GM12878 (cell line): ENCODE measurements at regions of chr1 and their contacts with region 1.

Region 1: DNA sequence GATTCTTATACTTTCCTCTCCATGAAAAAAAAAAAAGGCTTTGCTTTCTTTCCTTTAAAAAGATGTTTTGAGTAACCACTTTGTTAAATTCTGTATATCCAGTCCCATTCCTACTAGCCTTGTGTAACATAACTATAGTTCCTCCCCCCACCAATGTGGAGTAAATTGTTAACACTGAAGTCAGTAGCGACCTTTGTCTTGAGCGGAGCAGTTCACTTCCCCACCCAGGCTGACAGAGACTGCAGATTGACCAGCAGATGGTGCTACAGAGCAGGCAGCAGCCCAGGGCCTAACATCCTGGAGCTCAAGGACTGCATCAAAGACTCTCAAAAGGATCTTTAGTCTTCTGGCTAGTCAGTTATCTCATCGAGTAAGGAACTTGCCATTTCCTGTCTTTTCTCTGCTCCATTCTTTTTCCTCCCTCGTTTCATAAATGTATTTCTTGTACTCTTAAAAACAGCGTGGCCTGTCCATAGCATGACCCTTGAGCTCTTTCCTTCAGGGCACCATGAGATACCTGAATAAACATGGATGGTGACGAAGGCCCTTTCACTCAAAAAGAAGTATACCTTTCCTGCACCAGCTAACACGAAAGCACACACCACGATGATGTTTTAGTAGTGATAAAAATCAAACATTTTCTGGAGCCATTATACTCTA is 503.5 kb upstream of the PKN2 start:
- DNase-seq: peak; percentile 35
- ATAC-seq: peak; percentile 100
- H3K4me3 ChIP-seq: no peak overlapping the region
- H3K27ac ChIP-seq: no peak overlapping the region
- H3K4me1 ChIP-seq: no peaks in the 10 kb centered on the region
- H3K27me3 ChIP-seq: no peaks in the 10 kb centered on the region; a peak in 1 of 4 replicates
- CTCF ChIP-seq: peak; percentile 91 to 96 (median 94)
- EP300 ChIP-seq: no peak
- POLR2A ChIP-seq: no peak
- RAD21 ChIP-seq: peak; percentile 84

Region 2: DNA sequence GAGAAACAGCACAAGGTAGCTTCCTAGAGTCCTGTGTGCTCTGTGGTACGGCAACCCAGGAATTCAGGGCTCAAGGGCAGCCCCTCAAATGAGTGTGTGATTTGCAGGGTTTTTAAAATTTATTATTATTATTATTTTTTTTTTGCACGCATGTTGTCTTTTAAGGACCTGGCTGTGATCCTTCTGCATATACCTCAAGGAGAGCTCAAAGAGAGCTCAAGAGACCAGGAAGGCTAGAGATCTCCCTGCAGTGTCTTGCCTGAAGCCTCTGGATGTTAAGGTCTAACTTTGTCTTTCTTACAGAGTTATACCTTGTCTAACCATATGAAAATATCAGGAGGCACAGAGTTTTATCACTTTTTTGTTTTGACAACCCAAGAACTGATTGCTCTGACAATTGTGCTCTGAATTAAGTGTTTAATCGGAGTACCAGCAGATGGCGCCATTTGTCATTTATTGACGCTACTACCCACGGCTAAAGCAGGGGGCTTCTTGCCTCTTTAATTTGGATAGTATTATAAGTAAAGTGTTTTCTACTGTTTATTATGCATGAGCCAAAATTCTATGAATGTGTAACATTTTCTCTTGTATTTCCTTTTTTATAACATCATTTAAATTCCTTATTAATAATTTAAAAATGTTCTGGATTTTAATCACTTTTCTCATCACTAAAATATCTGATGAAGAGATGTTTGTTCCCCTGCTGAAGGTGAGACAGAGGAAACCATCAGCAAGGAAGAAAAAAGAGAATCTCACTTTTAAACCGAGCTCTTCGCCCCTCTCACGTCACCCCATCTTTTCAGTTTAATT is 887.7 kb before region 1 on chr1:
- CTCF ChIA-PET with region 1: interaction called, 8 read pairs
- POLR2A ChIA-PET with region 1: no interaction called
- RAD21 ChIA-PET with region 1: no interaction called
- SMC1A ChIA-PET with region 1: interaction called, 3 read pairs
- in situ Hi-C with region 1: no loop called
- intact Hi-C with region 1: loop called (anchors 10 kb)
- DNase-seq: no peak
- ATAC-seq: peak; percentile 87
- H3K4me3 ChIP-seq: no peak overlapping the region
- H3K27ac ChIP-seq: no peak overlapping the region
- H3K4me1 ChIP-seq: no peaks in the 10 kb centered on the region
- H3K27me3 ChIP-seq: no peaks in the 10 kb centered on the region
- CTCF ChIP-seq: peak; percentile 61 to 76 (median 74)
- EP300 ChIP-seq: no peak
- POLR2A ChIP-seq: no peak
- RAD21 ChIP-seq: peak; percentile 86

Region 3: DNA sequence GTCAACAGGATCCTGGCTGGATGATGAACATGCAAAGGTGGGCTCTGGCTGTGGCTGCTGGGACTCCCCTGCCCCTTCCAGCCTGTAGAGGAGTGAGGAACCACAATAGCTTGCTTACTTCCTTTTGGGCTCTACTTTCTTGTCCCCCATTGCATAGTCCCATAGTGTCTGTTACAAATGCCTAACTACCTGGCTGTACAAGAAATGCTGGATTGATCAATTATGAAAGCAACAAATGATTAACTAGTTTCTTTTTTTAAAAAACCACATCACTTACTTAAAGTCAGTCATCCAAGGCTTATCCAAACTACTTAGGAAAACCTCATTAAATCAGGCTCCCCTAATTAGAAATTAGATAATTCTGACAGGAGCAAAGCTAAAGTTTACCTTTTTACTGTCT is 10.6 kb before region 1 on chr1:
- CTCF ChIA-PET with region 1: interaction called, 16 read pairs
- POLR2A ChIA-PET with region 1: no interaction called
- RAD21 ChIA-PET with region 1: no interaction called
- SMC1A ChIA-PET with region 1: no interaction called
- in situ Hi-C with region 1: no loop called
- intact Hi-C with region 1: no loop called
- DNase-seq: no peak
- ATAC-seq: no peak
- H3K4me3 ChIP-seq: no peak overlapping the region
- H3K27ac ChIP-seq: no peak overlapping the region
- H3K4me1 ChIP-seq: no peaks in the 10 kb centered on the region
- H3K27me3 ChIP-seq: no peaks in the 10 kb centered on the region; a peak in 2 of 4 replicates
- CTCF ChIP-seq: no peak
- EP300 ChIP-seq: no peak
- POLR2A ChIP-seq: no peak
- RAD21 ChIP-seq: no peak

Region 4: DNA sequence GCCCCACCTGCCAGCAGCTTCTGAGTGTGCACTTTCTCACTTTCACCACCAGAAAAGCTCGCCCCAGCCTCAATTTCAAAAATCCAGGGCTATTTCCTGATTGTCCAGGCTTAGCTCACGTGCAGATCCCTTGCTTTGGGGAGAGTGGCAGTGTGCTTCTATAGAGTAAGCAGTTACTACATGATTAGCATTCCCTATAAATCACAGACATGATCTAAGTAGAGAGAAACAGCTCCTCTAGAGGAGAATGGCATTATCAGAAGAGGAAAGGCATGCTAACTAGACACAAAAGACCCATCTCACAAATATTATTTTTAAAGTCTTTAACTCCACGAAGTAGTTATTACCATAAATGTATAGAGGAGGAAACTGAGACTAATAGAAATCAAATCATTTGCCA is 47.6 kb after region 1 on chr1:
- CTCF ChIA-PET with region 1: interaction called, 15 read pairs
- POLR2A ChIA-PET with region 1: no interaction called
- RAD21 ChIA-PET with region 1: interaction called, 3 read pairs
- SMC1A ChIA-PET with region 1: interaction called, 3 read pairs
- in situ Hi-C with region 1: no loop called
- intact Hi-C with region 1: no loop called
- DNase-seq: no peak
- ATAC-seq: no peak
- H3K4me3 ChIP-seq: no peak overlapping the region
- H3K27ac ChIP-seq: no peak overlapping the region
- H3K4me1 ChIP-seq: no peaks in the 10 kb centered on the region
- H3K27me3 ChIP-seq: no peaks in the 10 kb centered on the region; a peak in 1 of 4 replicates
- CTCF ChIP-seq: no peak
- EP300 ChIP-seq: no peak
- POLR2A ChIP-seq: no peak
- RAD21 ChIP-seq: no peak

Region 5: GRCh38 chr1:88302843-88303486 is 122.4 kb after region 1 on chr1:
- CTCF ChIA-PET with region 1: interaction called, 14 read pairs
- POLR2A ChIA-PET with region 1: no interaction called
- RAD21 ChIA-PET with region 1: interaction called, 12 read pairs
- SMC1A ChIA-PET with region 1: interaction called, 10 read pairs
- in situ Hi-C with region 1: no loop called
- intact Hi-C with region 1: loop called (anchors 1 kb)
- DNase-seq: no peak
- ATAC-seq: 0 out of 3 replicates have a peak, but pooled peaks have one; percentile 28
- H3K4me3 ChIP-seq: no peak overlapping the region
- H3K27ac ChIP-seq: no peak overlapping the region
- H3K4me1 ChIP-seq: no peaks in the 10 kb centered on the region
- H3K27me3 ChIP-seq: no peaks in the 10 kb centered on the region
- CTCF ChIP-seq: peak in 2 of 3 experiments; percentile 16 to 44; a peak in 2 of 6 replicates
- EP300 ChIP-seq: no peak
- POLR2A ChIP-seq: no peak
- RAD21 ChIP-seq: peak; percentile 63

Region 6: DNA sequence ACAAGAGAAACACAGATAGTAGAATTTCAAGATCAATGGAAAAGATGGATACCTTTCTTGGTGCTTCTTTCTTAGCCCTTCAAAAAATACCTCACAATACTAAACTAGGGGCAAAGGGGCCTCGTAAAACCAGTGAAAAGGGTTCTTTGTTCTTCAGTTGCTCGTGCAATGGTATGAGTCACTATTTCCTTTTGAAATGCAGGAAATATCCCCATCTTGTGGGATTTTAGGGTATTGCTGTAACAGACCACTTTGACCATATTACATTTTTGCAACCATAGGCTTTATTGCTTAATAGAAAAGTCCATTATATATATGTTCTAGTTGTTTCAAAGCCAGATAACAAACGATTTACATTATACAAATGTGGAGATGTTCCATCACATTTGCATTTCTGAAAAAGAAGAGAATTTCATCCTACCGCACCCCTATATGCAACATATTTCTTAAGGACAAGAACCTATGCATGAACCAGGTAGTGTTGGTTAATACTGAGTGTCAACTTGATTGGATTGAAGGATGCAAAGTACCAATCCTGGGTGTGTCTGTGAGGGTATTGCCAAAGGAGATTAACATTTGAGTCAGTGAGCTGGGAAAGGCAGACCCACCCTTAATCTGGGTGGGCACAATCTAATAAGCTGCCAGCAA is 414.9 kb after region 1 on chr1:
- CTCF ChIA-PET with region 1: interaction called, 3 read pairs
- POLR2A ChIA-PET with region 1: no interaction called
- RAD21 ChIA-PET with region 1: no interaction called
- SMC1A ChIA-PET with region 1: interaction called, 4 read pairs
- in situ Hi-C with region 1: loop called (anchors 10 kb)
- intact Hi-C with region 1: loop called (anchors 1 kb)
- DNase-seq: peak; percentile 12
- ATAC-seq: peak; percentile 39
- H3K4me3 ChIP-seq: no peak overlapping the region
- H3K27ac ChIP-seq: no peak overlapping the region
- H3K4me1 ChIP-seq: no peaks in the 10 kb centered on the region
- H3K27me3 ChIP-seq: no peaks in the 10 kb centered on the region
- CTCF ChIP-seq: peak; percentile 20 to 53 (median 33); a peak in 5 of 6 replicates
- EP300 ChIP-seq: no peak
- POLR2A ChIP-seq: no peak
- RAD21 ChIP-seq: peak; percentile 69

Region 7: DNA sequence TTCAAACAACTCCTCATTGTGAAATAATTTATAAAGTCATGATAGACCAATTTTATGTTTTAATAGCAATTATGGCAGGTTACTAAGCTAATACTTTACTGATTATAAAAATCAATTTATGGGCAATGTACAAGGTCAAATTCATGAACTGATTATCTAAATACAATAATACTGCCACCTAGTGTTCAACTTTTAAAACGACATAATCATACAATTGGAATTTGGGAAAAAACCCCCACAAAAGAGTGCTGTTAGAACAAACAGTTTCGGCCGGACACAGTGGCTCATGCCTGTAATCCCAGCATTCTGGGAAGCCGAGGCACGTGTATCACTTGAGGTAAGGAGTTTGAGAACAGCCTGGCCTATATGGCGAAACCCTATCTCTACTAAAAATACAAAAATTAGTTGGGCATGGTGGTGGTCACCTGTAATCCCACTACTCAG is 696.8 kb after region 1 on chr1:
- CTCF ChIA-PET with region 1: no interaction called
- POLR2A ChIA-PET with region 1: no interaction called
- RAD21 ChIA-PET with region 1: no interaction called
- SMC1A ChIA-PET with region 1: interaction called, 5 read pairs
- in situ Hi-C with region 1: loop called (anchors 25 kb)
- intact Hi-C with region 1: loop called (anchors 5 kb)
- DNase-seq: no peak
- ATAC-seq: peak; percentile 56
- H3K4me3 ChIP-seq: no peak overlapping the region
- H3K27ac ChIP-seq: no peak overlapping the region
- H3K4me1 ChIP-seq: no peaks in the 10 kb centered on the region
- H3K27me3 ChIP-seq: no peaks in the 10 kb centered on the region
- CTCF ChIP-seq: peak; percentile 22 to 55 (median 24); a peak in 4 of 6 replicates
- EP300 ChIP-seq: no peak
- POLR2A ChIP-seq: no peak
- RAD21 ChIP-seq: peak; percentile 51; the same call in 1 of the 2 replicates